ENCODE measurements at regions of chr11 and their contacts with region 1.

Region 1: GRCh38 chr11:73350908-73351636 is 25.1 kb upstream of the RELT start:
- DNase-seq: no peak
- H3K4me3 ChIP-seq: no peak overlapping the region
- CTCF ChIP-seq: peak; percentile 78

Region 2: DNA sequence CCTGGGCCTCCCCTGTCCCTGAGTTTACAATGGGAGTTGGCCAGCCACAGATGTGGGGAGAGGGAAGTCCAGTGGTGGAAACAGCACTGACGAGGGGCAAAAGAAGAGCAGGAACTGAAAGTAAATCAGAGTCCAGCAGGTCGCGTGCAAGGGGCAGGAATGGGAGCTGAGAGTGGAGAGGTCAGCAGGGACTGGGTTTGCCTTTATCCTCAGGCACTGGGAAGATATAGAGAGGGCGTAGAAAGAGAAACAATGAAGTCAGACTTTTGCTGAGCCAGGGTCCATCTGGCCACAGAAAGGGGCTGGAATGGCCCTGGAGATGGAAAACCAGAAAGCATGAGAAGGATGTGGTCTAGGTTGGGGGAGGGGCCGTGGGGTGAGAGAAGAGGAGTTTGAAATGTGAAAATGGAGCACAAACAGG is 70.4 kb before region 1 on chr11:
- CTCF ChIA-PET with region 1: no interaction called
- POLR2A ChIA-PET with region 1: no interaction called
- DNase-seq: no peak
- H3K4me3 ChIP-seq: no peak overlapping the region
- CTCF ChIP-seq: no peak

Region 3: GRCh38 chr11:73314117-73314961 is 36.7 kb before region 1 on chr11:
- CTCF ChIA-PET with region 1: interaction called, 190 read pairs
- POLR2A ChIA-PET with region 1: no interaction called
- DNase-seq: no peak
- H3K4me3 ChIP-seq: peak overlapping the region; percentile 81
- CTCF ChIP-seq: peak; percentile 8

Region 4: DNA sequence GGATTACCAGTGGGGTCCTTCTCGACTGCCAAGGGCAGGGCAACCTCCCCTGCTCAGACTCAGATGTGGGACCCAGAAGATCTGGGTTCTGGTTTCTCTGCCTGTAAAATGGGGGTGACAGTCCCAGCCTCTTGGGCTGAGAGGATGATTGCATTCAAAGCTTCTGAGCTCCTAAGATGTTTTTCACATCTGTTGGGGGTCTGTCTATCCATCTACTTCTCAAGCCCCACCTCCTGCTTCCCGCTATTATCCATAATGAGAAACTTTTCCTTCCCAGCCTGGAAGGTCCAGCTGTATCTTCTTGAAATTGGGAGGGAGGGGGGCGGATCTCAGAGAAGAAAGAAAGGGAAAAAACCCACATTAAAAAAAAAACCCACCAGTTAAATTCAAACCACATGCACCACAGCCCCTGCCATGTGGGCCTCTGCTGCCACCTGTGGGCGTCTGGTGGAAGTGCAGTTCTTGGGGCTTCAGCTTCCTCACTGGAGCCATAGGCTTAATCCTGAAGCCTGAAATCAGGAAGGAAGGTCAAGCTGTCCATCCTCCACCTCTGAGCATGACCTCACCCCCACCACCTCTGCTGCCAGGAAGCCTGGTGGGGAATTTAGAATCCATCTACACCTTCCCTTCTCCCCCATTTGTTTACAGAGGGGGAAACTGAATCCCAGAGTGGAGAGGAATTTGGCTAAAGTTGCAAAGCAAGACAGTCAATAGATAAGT is 15.7 kb before region 1 on chr11:
- CTCF ChIA-PET with region 1: interaction called, 119 read pairs
- POLR2A ChIA-PET with region 1: no interaction called
- DNase-seq: no peak
- H3K4me3 ChIP-seq: no peak overlapping the region
- CTCF ChIP-seq: peak; percentile 91

Region 5: GRCh38 chr11:73384872-73385689 is 34.0 kb after region 1 on chr11:
- CTCF ChIA-PET with region 1: interaction called, 56 read pairs
- POLR2A ChIA-PET with region 1: no interaction called
- DNase-seq: no peak
- H3K4me3 ChIP-seq: no peak overlapping the region
- CTCF ChIP-seq: no peak